GM10248 (cell line): ENCODE measurements at regions of chr21 and their contacts with region 1.

Region 1: GRCh38 chr21:46622226-46622625 is 13.2 kb upstream of the PRMT2 start:
- DNase-seq: no peak
- CTCF ChIP-seq: no peak

Region 2: DNA sequence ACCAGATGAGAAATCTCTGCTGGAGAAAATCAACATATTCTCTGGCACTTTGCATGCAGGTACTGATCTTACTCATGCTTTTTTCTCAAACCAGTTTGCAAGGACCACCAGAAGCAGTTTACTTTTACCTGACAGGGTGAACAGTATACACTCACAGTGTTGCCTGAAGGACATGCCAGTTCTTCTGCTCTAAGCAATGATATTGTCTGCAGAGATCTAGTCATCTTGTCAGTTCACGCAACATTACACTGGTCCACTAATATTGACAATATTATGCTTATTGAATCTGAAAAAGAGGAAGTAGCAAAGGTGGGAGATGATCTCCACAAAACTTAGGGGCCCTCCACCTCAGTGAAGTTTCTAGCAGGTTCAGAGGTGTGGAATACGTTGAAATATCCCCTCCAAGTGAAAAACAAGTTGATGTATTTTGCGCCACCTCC is 13.5 kb before region 1 on chr21:
- CTCF ChIA-PET with region 1: interaction called, 15 read pairs
- POLR2A ChIA-PET with region 1: no interaction called
- DNase-seq: peak; percentile 31
- CTCF ChIP-seq: no peak